ENCODE measurements at regions of chr5 and their contacts with region 1.

Region 1: DNA sequence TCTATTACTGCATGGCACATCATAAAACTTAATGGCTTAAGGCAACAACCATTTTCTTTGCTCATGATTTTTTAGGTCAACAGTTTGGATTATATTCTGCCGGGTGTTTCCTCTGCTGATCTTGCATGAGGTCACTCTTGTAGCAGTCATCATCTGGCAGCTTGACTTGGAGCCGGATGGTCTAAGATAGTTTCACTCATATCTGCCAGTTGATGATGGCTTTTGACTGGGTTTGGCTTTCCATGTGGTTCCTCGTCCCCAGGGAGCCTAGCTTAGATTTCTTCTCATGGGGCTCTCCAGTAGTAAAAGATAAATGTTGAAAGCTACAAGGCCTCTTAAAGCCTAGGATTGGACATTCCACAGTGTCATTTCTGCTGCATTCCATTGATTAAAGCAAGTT is 27.4 kb downstream of the LNPEP start:
- DNase-seq: peak; percentile 16
- H3K4me3 Mint-ChIP-seq: peak overlapping the region; percentile 77
- H3K27ac Mint-ChIP-seq: peak overlapping the region; percentile 80
- H3K4me1 Mint-ChIP-seq: peaks cover 70% of the 10 kb centered on the region
- H3K27me3 Mint-ChIP-seq: no peaks in the 10 kb centered on the region

Region 2: DNA sequence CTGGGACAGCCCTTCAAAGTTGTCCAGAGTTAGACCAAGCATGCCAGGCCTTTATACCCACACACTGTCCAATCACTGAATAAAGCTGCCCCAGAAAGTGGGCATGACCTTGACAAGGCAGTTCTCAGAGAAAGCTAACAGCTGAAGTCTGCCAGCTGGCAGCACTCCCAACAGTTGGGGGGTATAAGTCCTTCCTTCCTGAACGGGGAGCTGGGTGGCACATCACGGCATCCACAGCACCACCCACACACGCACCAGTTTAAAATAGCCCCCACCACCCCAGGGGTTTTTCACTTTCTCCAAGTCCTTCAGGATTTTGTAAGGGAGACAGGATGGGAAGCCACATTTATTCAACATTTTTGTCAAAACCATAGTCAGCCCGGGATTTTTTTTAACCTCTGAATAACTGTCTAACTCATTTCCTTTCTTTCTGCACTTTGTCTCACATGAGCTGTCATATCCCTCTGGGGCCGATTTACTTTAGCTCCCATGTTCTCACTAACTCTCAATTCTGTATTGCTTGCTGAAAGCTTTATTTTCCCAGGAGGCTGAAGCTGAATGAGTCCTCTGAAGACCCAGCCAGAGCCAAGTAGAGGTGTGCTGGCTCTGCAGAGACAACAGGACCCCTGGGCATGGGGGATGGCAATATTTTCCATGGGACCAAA is 1556.7 kb before region 1 on chr5:
- intact Hi-C with region 1: no loop called
- DNase-seq: no peak
- H3K4me3 Mint-ChIP-seq: no peak overlapping the region
- H3K27ac Mint-ChIP-seq: no peak overlapping the region
- H3K4me1 Mint-ChIP-seq: no peaks in the 10 kb centered on the region
- H3K27me3 Mint-ChIP-seq: peaks cover 10% of the 10 kb centered on the region

Region 3: GRCh38 chr5:96037128-96037527 is 926.1 kb before region 1 on chr5:
- intact Hi-C with region 1: no loop called
- DNase-seq: no peak
- H3K4me3 Mint-ChIP-seq: no peak overlapping the region
- H3K27ac Mint-ChIP-seq: no peak overlapping the region
- H3K4me1 Mint-ChIP-seq: no peaks in the 10 kb centered on the region
- H3K27me3 Mint-ChIP-seq: no peaks in the 10 kb centered on the region

Region 4: GRCh38 chr5:96973532-96974401 is 10.5 kb after region 1 on chr5:
- intact Hi-C with region 1: loop called (anchors 1 kb)
- DNase-seq: no peak
- H3K4me3 Mint-ChIP-seq: peak overlapping the region; percentile 34
- H3K27ac Mint-ChIP-seq: peak overlapping the region; percentile 27
- H3K4me1 Mint-ChIP-seq: peaks cover 60% of the 10 kb centered on the region
- H3K27me3 Mint-ChIP-seq: no peaks in the 10 kb centered on the region